ENCODE measurements at regions of chr6 and their contacts with region 1.

Region 1: GRCh38 chr6:133923938-133924593 is 29.0 kb upstream of the TBPL1 start:
- DNase-seq: no peak
- ATAC-seq: peak; percentile 93

Region 2: DNA sequence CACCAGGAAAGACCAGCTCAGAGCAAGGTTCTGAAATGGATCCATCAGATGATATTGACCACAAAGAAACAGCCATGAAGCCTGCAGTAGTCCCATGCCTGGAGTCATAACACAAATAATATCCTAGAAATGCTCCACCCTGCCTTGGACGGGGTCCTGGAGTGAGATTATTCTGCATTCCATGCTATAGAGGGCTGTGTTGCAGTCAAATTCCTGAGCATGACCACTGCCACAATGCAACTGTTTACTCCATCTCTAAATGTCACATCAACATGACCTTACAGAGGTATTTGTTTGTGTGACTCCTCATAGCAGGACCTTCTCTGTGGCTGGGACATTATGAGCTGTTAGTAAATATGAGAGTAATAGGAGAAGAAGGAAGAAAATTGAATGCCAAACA is 292.6 kb before region 1 on chr6:
- intact Hi-C with region 1: no loop called
- DNase-seq: no peak
- ATAC-seq: no peak

Region 3: GRCh38 chr6:134097114-134097707 is 173.1 kb after region 1 on chr6:
- intact Hi-C with region 1: loop called (anchors 1 kb)
- DNase-seq: no peak
- ATAC-seq: no peak